Activated CD4-positive, alpha-beta T cell treated with anti-CD3 and anti-CD28 coated beads for 36 hours (primary cell): ENCODE measurements at regions of chr1 and their contacts with region 1.

Region 1: GRCh38 chr1:116769561-116769977 is 15.3 kb downstream of the CD2 start:
- DNase-seq: peak; percentile 86
- ATAC-seq: peak; percentile 53
- H3K4me3 Mint-ChIP-seq: peak overlapping the region; percentile 93
- H3K27ac Mint-ChIP-seq: peak overlapping the region; percentile 100
- H3K4me1 Mint-ChIP-seq: peaks cover 96% of the 10 kb centered on the region
- H3K27me3 Mint-ChIP-seq: no peaks in the 10 kb centered on the region

Region 2: DNA sequence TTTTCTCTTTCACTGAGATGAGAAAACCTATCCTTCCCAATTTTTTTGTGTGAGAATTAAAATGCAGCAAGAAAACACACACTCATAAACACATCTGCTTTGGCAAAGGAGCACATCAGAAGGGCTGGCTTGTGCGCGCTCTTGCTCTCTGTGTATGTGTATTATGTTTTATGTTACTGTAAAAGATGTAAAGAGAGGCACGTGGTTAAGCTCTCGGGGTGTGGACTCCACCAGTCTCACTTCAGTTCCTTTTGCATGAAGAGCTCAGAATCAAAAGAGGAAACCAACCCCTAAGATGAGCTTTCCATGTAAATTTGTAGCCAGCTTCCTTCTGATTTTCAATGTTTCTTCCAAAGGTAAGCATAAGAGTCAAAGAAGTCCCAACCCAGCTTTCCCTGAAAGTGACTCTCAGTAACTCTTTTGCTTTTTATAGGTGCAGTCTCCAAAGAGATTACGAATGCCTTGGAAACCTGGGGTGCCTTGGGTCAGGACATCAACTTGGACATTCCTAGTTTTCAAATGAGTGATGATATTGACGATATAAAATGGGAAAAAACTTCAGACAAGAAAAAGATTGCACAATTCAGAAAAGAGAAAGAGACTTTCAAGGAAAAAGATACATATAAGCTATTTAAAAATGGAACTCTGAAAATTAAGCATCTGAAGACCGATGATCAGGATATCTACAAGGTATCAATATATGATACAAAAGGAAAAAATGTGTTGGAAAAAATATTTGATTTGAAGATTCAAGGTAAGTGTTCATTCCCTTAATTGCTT is 15.2 kb before region 1 on chr1 and contains the start of gene CD2:
- CTCF ChIA-PET with region 1: interaction called, 45 read pairs
- POLR2A ChIA-PET with region 1: interaction called, 93 read pairs
- intact Hi-C with region 1: loop called in 1 of 2 experiments (anchors 2 kb)
- DNase-seq: peak; percentile 80
- ATAC-seq: peak; percentile 80
- H3K4me3 Mint-ChIP-seq: peak within 1 kb of the TSS; percentile 93
- H3K27ac Mint-ChIP-seq: peak within 1 kb of the TSS; percentile 100
- H3K4me1 Mint-ChIP-seq: peaks cover 41% of the 10 kb centered on the region
- H3K27me3 Mint-ChIP-seq: no peaks in the 10 kb centered on the region
- total RNA-seq, gene CD2: 287 to 291 TPM

Region 3: GRCh38 chr1:117523111-117523510 is 753.5 kb after region 1 on chr1:
- CTCF ChIA-PET with region 1: no interaction called
- POLR2A ChIA-PET with region 1: no interaction called
- intact Hi-C with region 1: no loop called
- DNase-seq: no peak
- ATAC-seq: no peak
- H3K4me3 Mint-ChIP-seq: no peak overlapping the region
- H3K27ac Mint-ChIP-seq: no peak overlapping the region
- H3K4me1 Mint-ChIP-seq: peaks cover 19% of the 10 kb centered on the region
- H3K27me3 Mint-ChIP-seq: no peaks in the 10 kb centered on the region